ENCODE measurements at regions of chr12 and their contacts with region 1.

Region 1: DNA sequence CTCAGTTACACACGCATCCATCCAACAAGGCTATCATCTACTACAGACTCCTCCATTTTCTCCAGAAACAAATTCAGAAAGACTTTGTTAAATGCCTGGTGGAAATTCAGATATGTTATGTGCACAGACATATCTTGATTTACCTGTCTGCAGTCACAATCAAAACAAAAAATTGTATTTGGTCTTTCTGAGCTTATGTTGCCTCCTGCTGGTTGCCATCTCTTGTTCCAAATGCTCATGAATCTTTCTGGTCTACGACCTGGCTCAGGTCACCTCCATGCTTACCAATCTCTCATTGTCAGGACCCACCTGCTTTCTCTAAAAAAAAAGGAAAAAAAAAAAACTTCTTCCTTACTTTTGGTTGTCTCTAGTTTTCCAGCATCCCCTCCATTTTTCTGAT is 169.2 kb upstream of the PLXNC1 start:
- DNase-seq: no peak
- ATAC-seq: peak in 2 of 4 donors; percentile 36
- H3K4me3 ChIP-seq: no peak overlapping the region
- H3K27ac ChIP-seq: peak overlapping the region in 1 of 12 donors; percentile 7
- H3K4me1 ChIP-seq: peaks cover 0 to 16% (median 5%) of the 10 kb centered on the region in 12 donors
- H3K27me3 ChIP-seq: no peaks in the 10 kb centered on the region
- CTCF ChIP-seq: peak; percentile 26 to 73 (median 58)
- POLR2A ChIP-seq: no peak

Region 2: GRCh38 chr12:92796650-92797049 is 1182.5 kb before region 1 on chr12:
- intact Hi-C with region 1: no loop called
- DNase-seq: no peak
- ATAC-seq: no peak
- H3K4me3 ChIP-seq: no peak overlapping the region
- H3K27ac ChIP-seq: no peak overlapping the region
- H3K4me1 ChIP-seq: no peaks in the 10 kb centered on the region
- H3K27me3 ChIP-seq: no peaks in the 10 kb centered on the region
- CTCF ChIP-seq: no peak
- POLR2A ChIP-seq: no peak

Region 3: DNA sequence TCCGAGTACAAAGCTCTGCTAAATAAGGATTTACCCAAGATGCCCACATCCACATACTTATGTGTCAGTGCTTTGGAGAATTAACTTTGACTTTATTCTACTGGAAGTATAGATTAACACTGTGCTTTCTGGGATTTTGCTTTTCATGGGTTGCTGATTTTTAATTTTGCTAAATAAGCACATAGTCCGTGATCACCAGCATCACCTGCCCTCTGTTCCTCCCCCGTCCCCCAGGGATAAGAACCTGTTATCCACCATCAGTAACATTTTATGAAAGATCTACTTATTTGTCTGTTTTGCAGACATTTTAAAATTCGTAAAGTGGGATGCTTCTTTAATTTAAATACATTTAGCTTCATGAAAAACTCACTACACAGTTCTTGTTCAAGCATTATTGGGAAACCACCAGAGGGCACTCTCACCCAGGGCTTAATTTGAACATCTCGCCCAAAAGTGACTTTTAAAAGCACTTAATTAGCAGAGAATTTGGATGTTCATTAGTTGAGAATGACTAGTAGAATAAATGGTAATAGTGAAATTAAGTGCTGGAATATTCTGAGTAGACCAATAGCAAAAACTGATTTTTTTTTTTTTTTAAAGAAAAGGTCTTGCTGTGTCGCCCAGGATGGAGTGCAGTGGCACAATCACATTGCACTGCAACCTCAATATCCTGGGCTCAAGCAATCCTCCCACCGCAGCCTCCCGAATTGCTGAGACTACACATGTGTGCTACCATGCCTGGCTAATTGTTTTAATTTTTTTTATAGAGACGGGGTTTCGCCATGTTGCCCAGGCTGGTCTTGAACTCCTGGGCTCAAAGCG is 476.2 kb before region 1 on chr12:
- intact Hi-C with region 1: loop called in 6 of 10 experiments (anchors 2 to 10 kb)
- DNase-seq: peak in 2 of 5 donors; percentile 33 to 39
- ATAC-seq: peak in 1 of 4 donors; percentile 28
- H3K4me3 ChIP-seq: no peak overlapping the region
- H3K27ac ChIP-seq: no peak overlapping the region
- H3K4me1 ChIP-seq: peaks cover 0 to 11% (median 0%) of the 10 kb centered on the region in 12 donors
- H3K27me3 ChIP-seq: no peaks in the 10 kb centered on the region
- CTCF ChIP-seq: peak; percentile 66 to 87 (median 81)
- POLR2A ChIP-seq: no peak

Region 4: GRCh38 chr12:93569656-93570551 is 409.3 kb before region 1 on chr12:
- intact Hi-C with region 1: loop called (anchors 2 to 5 kb)
- DNase-seq: peak; percentile 90 to 92 (median 91)
- ATAC-seq: peak; percentile 76 to 84 (median 79)
- H3K4me3 ChIP-seq: peak overlapping the region; percentile 61 to 90 (median 72)
- H3K27ac ChIP-seq: peak overlapping the region; percentile 81 to 99 (median 96)
- H3K4me1 ChIP-seq: peaks cover 0 to 35% (median 6%) of the 10 kb centered on the region in 12 donors
- H3K27me3 ChIP-seq: peaks cover 0 to 21% (median 0%) of the 10 kb centered on the region in 9 donors
- CTCF ChIP-seq: peak; percentile 60 to 93 (median 88)
- POLR2A ChIP-seq: no peak

Region 5: GRCh38 chr12:93682846-93683261 is 296.3 kb before region 1 on chr12:
- intact Hi-C with region 1: loop called in 4 of 10 experiments (anchors 5 to 10 kb)
- DNase-seq: peak in 4 of 5 donors; percentile 55 to 78 (median 71)
- ATAC-seq: peak; percentile 82 to 91 (median 86)
- H3K4me3 ChIP-seq: peak overlapping the region in 1 of 12 donors; percentile 8
- H3K27ac ChIP-seq: peak overlapping the region; percentile 64 to 100 (median 84)
- H3K4me1 ChIP-seq: peaks cover 0 to 82% (median 37%) of the 10 kb centered on the region in 12 donors
- H3K27me3 ChIP-seq: no peaks in the 10 kb centered on the region
- CTCF ChIP-seq: no peak
- POLR2A ChIP-seq: no peak

Region 6: DNA sequence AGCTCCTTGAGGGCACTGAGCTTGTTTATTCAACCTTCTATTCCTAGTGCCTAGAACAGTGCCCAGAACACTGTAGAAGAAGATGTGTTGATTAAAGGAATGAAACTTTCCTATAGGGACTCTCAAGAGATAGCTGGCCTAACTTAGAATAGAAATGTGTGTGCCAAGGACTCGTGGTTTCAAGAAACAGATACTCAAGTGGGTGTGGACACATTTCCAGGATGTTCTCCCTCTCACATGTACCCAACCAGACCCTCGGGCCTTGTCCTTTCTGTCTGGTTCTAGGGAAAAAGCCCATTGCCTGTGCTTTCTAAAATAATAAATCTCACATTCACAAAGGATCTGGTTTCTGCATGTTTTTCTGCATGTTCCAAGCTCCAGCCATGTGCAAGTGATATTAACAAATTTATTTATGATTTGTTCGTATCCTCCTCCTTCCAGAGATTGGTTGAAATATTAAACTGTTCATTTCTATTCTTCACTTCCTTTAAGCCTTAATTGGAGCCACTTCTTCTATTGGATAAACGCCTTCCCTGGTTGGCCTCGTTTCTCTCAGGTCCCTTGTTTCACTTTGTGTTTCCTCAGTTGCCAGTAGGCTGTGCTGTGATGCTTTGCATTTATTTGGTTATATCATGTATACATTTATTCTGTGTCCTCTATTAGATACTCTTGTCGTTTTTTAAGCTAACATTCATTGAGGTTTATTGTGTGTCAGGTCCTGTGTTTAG is 212.2 kb before region 1 on chr12:
- intact Hi-C with region 1: loop called in 9 of 10 experiments (anchors 1 to 5 kb)
- DNase-seq: peak in 4 of 5 donors; percentile 37 to 60 (median 50)
- ATAC-seq: peak; percentile 79 to 88 (median 82)
- H3K4me3 ChIP-seq: peak overlapping the region in 1 of 12 donors; percentile 5
- H3K27ac ChIP-seq: peak overlapping the region; percentile 27 to 72 (median 55)
- H3K4me1 ChIP-seq: peaks cover 0 to 56% (median 42%) of the 10 kb centered on the region in 12 donors
- H3K27me3 ChIP-seq: no peaks in the 10 kb centered on the region
- CTCF ChIP-seq: peak; percentile 38 to 81 (median 64)
- POLR2A ChIP-seq: no peak

Region 7: GRCh38 chr12:93832131-93832530 is 147.1 kb before region 1 on chr12:
- intact Hi-C with region 1: loop called in 1 of 10 experiments (anchors 5 kb)
- DNase-seq: no peak
- ATAC-seq: no peak
- H3K4me3 ChIP-seq: no peak overlapping the region
- H3K27ac ChIP-seq: no peak overlapping the region
- H3K4me1 ChIP-seq: peaks cover 0 to 43% (median 19%) of the 10 kb centered on the region in 12 donors
- H3K27me3 ChIP-seq: no peaks in the 10 kb centered on the region
- CTCF ChIP-seq: no peak
- POLR2A ChIP-seq: no peak

Measured in heart left ventricle (tissue), 16 donors.